Natural killer cell (primary cell): ENCODE measurements at regions of chr22 and their contacts with region 1.

Region 1: DNA sequence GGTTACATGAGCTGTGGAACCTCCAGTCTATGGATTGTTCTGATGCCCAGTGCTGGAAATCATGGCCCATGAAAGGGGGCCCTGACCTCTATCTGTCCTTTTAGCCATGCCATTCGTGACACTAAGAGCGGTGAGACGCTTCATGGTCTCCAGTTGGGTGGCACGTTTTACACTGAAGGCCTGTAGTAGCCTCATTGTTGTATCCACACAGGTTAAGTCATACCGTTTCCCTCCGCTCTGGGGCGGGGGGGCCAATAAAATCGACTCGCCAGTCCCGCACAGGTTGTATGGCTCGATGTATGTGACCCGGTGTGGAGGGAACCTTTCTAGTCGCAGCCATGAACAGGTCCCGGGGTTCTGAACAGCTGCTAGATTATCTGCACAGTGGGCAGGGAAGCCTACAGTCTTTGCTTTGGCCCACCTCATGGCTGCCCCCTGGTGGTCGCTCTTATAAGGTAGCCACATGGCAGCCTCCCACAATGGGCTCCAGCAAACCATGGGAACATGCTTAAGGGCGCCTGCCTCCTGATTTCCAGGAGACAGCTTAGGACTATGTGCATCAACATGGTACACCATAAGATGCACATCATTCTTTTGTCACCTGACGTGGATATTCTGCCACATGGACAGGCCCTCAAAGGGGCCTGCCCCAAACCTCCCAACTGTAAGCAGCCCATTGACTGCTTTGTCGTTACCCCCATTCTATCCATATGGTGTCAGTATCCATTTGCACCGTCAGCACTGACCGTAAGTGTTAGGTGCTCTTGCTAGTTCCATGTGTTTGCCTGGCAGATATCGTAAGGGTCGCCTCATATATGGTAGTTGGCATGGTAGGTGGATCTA is 19.7 kb upstream of the APOL3 start:
- DNase-seq: peak; percentile 84 to 92
- ATAC-seq: peak; percentile 92 to 100 (median 99)
- H3K4me3 ChIP-seq: no peak overlapping the region
- H3K4me3 Mint-ChIP-seq: no peak overlapping the region
- H3K27ac ChIP-seq: no peak overlapping the region
- H3K27ac Mint-ChIP-seq: no peak overlapping the region
- H3K4me1 ChIP-seq: peaks cover 6% of the 10 kb centered on the region
- H3K4me1 Mint-ChIP-seq: peaks cover 0 to 5% of the 10 kb centered on the region in 2 donors
- H3K27me3 ChIP-seq: no peaks in the 10 kb centered on the region
- H3K27me3 Mint-ChIP-seq: no peaks in the 10 kb centered on the region
- CTCF ChIP-seq: peak; percentile 90

Region 2: DNA sequence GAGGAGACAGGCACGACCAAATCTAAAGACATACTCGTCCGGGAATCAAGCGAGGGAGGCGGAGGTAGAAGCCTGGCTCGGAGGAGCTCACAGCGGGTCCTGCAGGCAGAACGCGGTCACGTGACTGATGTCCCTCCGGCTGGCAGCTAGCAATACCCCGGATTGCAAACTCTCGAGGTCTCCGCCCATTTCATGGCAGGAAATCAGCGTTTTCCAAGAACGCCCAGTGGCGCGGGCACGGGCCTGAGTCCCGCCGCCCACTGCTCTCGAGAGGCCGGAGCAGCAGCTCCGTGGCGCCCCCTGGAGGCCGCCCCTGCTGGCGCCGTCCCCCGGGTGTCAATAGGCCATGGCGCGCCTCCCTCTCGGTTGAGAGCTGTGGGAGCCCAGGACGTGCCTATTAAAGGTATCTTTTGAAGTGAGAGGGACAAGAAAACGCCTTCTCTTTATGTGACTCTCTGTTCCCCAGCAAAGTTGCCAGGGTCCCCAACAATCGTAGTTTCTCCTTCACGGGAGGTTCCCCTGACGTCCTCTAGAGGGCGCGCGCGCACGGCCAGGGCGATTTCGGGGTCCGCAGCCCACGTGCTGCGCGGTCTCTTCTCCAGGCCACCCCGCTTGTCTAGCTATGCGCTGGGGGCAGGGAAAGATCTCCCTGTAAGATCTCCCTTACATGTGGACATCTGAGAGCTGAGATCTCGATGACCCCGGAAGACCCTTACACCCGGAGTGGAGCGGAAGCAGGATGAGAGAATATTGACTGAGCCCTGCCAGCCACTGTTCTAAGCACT is 114.3 kb before region 1 on chr22:
- intact Hi-C with region 1: loop called (anchors 1 kb)
- DNase-seq: peak; percentile 67 to 76
- ATAC-seq: peak; percentile 83 to 86 (median 84)
- H3K4me3 ChIP-seq: peak overlapping the region; percentile 39
- H3K4me3 Mint-ChIP-seq: peak overlapping the region; percentile 89
- H3K27ac ChIP-seq: no peak overlapping the region
- H3K27ac Mint-ChIP-seq: peak overlapping the region in 1 of 2 donors; percentile 86
- H3K4me1 ChIP-seq: peaks cover 14% of the 10 kb centered on the region
- H3K4me1 Mint-ChIP-seq: peaks cover 5 to 12% of the 10 kb centered on the region in 2 donors
- H3K27me3 ChIP-seq: no peaks in the 10 kb centered on the region
- H3K27me3 Mint-ChIP-seq: no peaks in the 10 kb centered on the region
- CTCF ChIP-seq: peak; percentile 100

Region 3: DNA sequence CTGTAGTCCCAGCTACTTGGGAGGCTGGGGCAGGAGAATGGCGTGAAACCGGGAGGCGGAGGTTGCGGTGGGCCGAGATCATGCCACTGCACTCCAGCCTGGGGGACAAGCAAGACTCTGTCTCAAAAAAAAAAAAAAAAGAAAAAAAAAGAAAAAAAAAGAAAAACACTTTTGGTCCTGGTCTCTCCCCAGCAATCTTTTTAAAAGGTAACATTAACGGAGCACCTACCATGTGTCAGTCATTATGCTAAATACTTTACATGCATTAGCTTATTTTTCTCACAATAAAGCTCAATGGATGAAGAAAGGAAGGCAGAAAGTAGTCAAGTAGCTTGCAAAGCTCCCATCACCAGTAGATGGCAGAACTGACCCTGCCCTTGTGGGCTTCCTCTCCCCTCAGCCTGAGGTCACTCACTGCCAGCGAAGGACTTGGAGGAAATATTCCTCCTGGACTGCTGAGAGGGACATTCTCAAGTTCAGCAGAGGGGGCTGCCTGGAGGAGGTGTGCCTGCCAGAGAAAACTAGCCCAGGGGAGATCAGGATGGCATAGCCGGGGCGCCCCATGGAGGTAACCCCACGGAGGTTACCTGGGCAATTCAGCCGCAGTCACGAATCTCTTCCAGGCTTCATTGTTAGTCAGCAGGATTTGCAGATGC is 35.2 kb before region 1 on chr22:
- intact Hi-C with region 1: loop called (anchors 1 kb)
- DNase-seq: peak in 1 of 2 donors; percentile 65
- ATAC-seq: peak; percentile 61 to 82 (median 77)
- H3K4me3 ChIP-seq: no peak overlapping the region
- H3K4me3 Mint-ChIP-seq: no peak overlapping the region
- H3K27ac ChIP-seq: no peak overlapping the region
- H3K27ac Mint-ChIP-seq: peak overlapping the region; percentile 71 to 77
- H3K4me1 ChIP-seq: peaks cover 11% of the 10 kb centered on the region
- H3K4me1 Mint-ChIP-seq: peaks cover 14 to 25% of the 10 kb centered on the region in 2 donors
- H3K27me3 ChIP-seq: no peaks in the 10 kb centered on the region
- H3K27me3 Mint-ChIP-seq: no peaks in the 10 kb centered on the region
- CTCF ChIP-seq: peak; percentile 62

Region 4: GRCh38 chr22:36160499-36160942 is 19.7 kb before region 1 on chr22 and contains the start of gene APOL3:
- intact Hi-C with region 1: loop called (anchors 1 kb)
- DNase-seq: peak; percentile 49 to 83
- ATAC-seq: peak; percentile 32 to 55 (median 40)
- H3K4me3 ChIP-seq: peak within 1 kb of the TSS; percentile 74
- H3K4me3 Mint-ChIP-seq: peak within 1 kb of the TSS; percentile 95
- H3K27ac ChIP-seq: peak within 1 kb of the TSS; percentile 96
- H3K27ac Mint-ChIP-seq: peak within 1 kb of the TSS; percentile 99 to 100
- H3K4me1 ChIP-seq: peaks cover 79% of the 10 kb centered on the region
- H3K4me1 Mint-ChIP-seq: peaks cover 77 to 81% of the 10 kb centered on the region in 2 donors
- H3K27me3 ChIP-seq: no peaks in the 10 kb centered on the region
- H3K27me3 Mint-ChIP-seq: no peaks in the 10 kb centered on the region
- CTCF ChIP-seq: no peak
- total RNA-seq, gene APOL3: 105 to 166 (median 111) TPM

Region 5: GRCh38 chr22:36197065-36197440 is 16.8 kb after region 1 on chr22:
- intact Hi-C with region 1: no loop called
- DNase-seq: peak in 1 of 2 donors; percentile 23
- ATAC-seq: no peak
- H3K4me3 ChIP-seq: no peak overlapping the region
- H3K4me3 Mint-ChIP-seq: no peak overlapping the region
- H3K27ac ChIP-seq: no peak overlapping the region
- H3K27ac Mint-ChIP-seq: peak overlapping the region in 1 of 2 donors; percentile 45
- H3K4me1 ChIP-seq: peaks cover 25% of the 10 kb centered on the region
- H3K4me1 Mint-ChIP-seq: peaks cover 22 to 24% of the 10 kb centered on the region in 2 donors
- H3K27me3 ChIP-seq: no peaks in the 10 kb centered on the region
- H3K27me3 Mint-ChIP-seq: no peaks in the 10 kb centered on the region
- CTCF ChIP-seq: no peak